ENCODE measurements at regions of chr22 and their contacts with region 1.

Region 1: GRCh38 chr22:40898850-40899357 is 37.0 kb upstream of the DNAJB7 start:
- DNase-seq: peak in 1 of 10 donors; percentile 4
- H3K4me3 ChIP-seq: peak overlapping the region in 9 of 59 donors; percentile 3 to 34 (median 21)
- H3K27ac ChIP-seq: peak overlapping the region in 10 of 59 donors; percentile 0 to 65 (median 28)
- H3K27me3 ChIP-seq: no peaks in the 10 kb centered on the region
- CTCF ChIP-seq: peak in 54 of 56 donors; percentile 40 to 83 (median 64)

Region 2: DNA sequence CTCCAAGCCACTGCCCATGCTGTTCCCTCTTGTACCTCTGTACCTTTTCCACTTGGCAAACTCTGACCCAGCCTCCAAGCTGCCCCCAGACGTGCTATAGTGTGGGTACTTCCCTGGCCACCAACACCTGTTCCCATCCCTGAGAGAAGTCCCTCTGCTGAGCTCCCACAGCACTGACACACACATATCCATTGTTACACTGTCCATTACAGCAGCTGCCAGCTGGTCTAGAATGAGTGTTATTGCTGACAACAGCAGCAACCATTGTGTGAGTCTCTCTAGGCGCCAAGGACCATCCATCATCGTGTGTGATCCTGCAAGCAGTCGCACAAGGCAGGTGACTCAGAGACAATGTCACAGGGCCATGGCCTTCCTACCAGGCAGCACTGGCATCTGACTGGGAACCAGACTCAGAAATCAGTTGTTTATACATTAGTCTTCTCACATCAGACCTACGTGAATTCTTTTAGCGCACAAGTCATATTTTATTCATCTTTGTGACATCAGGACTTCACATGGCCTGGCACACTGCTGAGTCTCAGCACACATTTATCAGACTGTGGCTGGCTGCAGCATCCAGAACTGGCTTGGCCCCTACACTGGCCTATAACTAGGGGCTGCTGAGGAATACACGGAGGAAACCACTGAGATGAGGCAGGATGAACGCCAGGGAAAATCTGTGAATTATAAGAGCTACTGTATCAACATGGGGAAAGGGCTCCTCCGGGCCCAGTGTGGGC is 472.1 kb before region 1 on chr22:
- intact Hi-C with region 1: loop called in 1 of 2 experiments (anchors 10 kb)
- DNase-seq: peak in 8 of 10 donors; percentile 70 to 93 (median 83)
- H3K4me3 ChIP-seq: peak overlapping the region in 10 of 59 donors; percentile 1 to 48 (median 8)
- H3K27ac ChIP-seq: peak overlapping the region; percentile 41 to 94 (median 84)
- H3K27me3 ChIP-seq: no peaks in the 10 kb centered on the region
- CTCF ChIP-seq: peak in 6 of 56 donors; percentile 12 to 38 (median 18)

Region 3: DNA sequence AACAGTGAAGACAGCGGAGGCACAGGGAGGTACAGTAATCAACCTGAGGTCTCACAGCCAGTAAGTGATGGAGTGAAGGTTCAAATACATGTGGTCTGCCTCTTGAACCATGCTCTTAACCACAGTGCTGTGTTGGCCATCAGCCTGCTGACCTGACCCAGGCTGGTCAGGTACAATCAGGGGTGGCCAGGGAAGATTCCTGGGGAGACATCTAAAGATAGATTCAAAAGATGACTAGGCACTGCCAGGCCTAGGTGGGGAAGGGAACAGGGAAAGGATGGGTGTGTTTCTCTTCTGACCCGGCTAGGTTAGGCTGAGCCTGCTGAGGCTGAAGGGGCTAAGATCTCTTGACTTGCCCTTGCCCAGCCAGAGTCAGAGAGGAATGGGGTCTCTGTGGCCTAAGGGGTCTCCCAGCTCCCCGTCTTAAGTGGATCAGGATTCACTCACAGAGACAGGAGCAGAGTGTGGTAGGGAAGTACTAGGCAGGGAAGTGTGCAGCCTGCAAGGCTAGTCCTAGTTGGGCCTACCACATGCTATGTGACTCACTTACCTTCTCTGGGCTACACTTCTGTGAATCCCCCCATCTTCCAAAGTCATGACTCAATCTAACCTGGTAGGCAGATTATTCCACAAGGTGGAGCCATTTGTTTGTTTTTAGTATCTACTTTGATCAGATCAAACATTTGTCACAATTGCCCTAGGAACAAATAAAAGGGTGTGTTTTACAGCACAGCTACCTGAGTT is 923.6 kb after region 1 on chr22:
- intact Hi-C with region 1: no loop called
- DNase-seq: no peak
- H3K4me3 ChIP-seq: no peak overlapping the region
- H3K27ac ChIP-seq: no peak overlapping the region
- H3K27me3 ChIP-seq: no peaks in the 10 kb centered on the region
- CTCF ChIP-seq: peak; percentile 34 to 80 (median 62)